ENCODE measurements at regions of chr4 and their contacts with region 1.

Region 1: DNA sequence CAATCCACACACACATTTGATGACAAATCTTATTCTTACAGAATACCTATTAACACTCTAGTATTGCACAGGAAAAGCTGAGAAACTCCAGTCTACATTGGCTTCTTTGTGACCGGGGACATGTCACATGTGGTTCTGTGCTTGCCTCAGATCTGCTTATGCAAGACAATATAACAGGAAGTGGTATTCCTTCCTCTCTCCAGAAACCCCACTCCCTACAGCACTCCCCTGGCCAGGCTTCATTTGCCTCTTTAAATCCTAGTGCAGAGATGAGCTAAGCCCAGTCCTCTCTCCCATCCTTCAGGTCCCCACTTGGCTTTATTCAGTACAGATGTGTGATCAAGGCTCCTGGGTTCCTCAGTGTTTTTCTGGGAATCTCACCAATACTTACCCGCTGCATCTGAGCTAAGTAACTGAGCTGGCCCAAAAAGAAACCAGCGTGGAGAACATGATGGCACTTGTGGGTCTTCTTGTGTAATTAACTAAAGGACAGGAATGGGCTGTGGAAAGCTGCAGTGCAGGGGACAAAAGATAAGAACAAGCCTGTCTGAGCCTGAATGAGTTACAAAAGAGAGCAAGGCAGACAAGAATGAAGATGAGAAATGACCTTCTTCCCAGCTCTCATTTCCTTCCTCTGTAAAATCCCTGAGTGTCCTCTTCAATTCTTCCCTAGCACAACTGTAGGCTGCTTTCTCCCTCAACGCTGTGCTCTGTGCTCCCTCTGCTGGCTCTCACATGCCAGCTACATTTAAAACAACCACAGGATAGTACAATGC is 105.6 kb downstream of the HNRNPD start:
- DNase-seq: peak; percentile 61
- ATAC-seq: peak; percentile 98
- H3K4me3 Mint-ChIP-seq: no peak overlapping the region
- H3K27ac Mint-ChIP-seq: no peak overlapping the region
- H3K4me1 Mint-ChIP-seq: peaks cover 14% of the 10 kb centered on the region
- H3K27me3 Mint-ChIP-seq: peaks cover 6% of the 10 kb centered on the region

Region 2: GRCh38 chr4:81405894-81406401 is 862.3 kb before region 1 on chr4:
- CTCF ChIA-PET with region 1: interaction called, 11 read pairs
- POLR2A ChIA-PET with region 1: no interaction called
- DNase-seq: peak; percentile 69
- ATAC-seq: peak; percentile 75
- H3K4me3 Mint-ChIP-seq: no peak overlapping the region
- H3K27ac Mint-ChIP-seq: no peak overlapping the region
- H3K4me1 Mint-ChIP-seq: peaks cover 5% of the 10 kb centered on the region
- H3K27me3 Mint-ChIP-seq: no peaks in the 10 kb centered on the region

Region 3: GRCh38 chr4:82248903-82249632 is 19.2 kb before region 1 on chr4:
- CTCF ChIA-PET with region 1: interaction called, 11 read pairs
- POLR2A ChIA-PET with region 1: no interaction called
- DNase-seq: no peak
- ATAC-seq: no peak
- H3K4me3 Mint-ChIP-seq: no peak overlapping the region
- H3K27ac Mint-ChIP-seq: no peak overlapping the region
- H3K4me1 Mint-ChIP-seq: no peaks in the 10 kb centered on the region
- H3K27me3 Mint-ChIP-seq: peaks cover 2% of the 10 kb centered on the region

Region 4: GRCh38 chr4:82284858-82285805 is 16.9 kb after region 1 on chr4:
- CTCF ChIA-PET with region 1: interaction called, 14 read pairs
- POLR2A ChIA-PET with region 1: no interaction called
- DNase-seq: peak; percentile 99
- ATAC-seq: peak; percentile 99
- H3K4me3 Mint-ChIP-seq: peak overlapping the region; percentile 74
- H3K27ac Mint-ChIP-seq: peak overlapping the region; percentile 81
- H3K4me1 Mint-ChIP-seq: peaks cover 11% of the 10 kb centered on the region
- H3K27me3 Mint-ChIP-seq: peaks cover 21% of the 10 kb centered on the region